CD4-positive, alpha-beta T cell (primary cell): ENCODE measurements at regions of chr7 and their contacts with region 1.

Region 1: DNA sequence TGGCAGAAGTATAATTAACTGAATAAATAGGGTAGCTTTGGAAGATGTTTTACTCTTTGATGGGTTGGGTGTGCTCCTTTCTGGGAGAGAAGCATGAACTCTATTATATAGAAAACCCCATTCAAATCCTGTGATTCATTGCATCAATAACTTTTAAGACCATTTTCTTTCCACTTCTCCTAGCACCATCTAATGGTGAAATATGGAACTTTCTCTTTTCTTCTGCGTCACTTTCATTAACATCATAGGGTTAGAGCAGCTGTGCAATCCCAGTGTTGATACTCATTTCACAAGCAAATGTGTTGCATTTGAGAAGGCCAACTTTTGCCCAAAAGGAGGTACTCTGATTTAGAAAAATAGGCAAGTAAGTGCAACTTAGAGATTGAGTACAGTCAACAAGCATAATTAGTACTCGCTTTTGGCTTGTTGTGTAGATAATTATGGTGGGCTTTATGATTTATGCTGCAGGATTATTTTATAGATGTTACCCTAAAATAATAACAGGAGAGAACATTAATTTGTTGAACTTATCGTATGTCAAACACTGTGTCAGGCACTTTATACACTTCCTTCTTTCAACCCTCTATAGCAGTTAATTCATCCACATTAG is 92.9 kb downstream of the CPED1 start:
- DNase-seq: peak in 3 of 14 experiments; percentile 57 to 68 (median 66)
- ATAC-seq: peak; percentile 74
- H3K4me3 ChIP-seq: no peak overlapping the region
- H3K4me3 Mint-ChIP-seq: no peak overlapping the region
- H3K27ac ChIP-seq: no peak overlapping the region
- H3K27ac Mint-ChIP-seq: no peak overlapping the region
- H3K4me1 ChIP-seq: no peaks in the 10 kb centered on the region
- H3K4me1 Mint-ChIP-seq: no peaks in the 10 kb centered on the region
- H3K27me3 ChIP-seq: peaks cover 0 to 4% of the 10 kb centered on the region in 2 experiments
- H3K27me3 Mint-ChIP-seq: peaks cover 23% of the 10 kb centered on the region
- CTCF ChIP-seq: peak; percentile 79

Region 2: DNA sequence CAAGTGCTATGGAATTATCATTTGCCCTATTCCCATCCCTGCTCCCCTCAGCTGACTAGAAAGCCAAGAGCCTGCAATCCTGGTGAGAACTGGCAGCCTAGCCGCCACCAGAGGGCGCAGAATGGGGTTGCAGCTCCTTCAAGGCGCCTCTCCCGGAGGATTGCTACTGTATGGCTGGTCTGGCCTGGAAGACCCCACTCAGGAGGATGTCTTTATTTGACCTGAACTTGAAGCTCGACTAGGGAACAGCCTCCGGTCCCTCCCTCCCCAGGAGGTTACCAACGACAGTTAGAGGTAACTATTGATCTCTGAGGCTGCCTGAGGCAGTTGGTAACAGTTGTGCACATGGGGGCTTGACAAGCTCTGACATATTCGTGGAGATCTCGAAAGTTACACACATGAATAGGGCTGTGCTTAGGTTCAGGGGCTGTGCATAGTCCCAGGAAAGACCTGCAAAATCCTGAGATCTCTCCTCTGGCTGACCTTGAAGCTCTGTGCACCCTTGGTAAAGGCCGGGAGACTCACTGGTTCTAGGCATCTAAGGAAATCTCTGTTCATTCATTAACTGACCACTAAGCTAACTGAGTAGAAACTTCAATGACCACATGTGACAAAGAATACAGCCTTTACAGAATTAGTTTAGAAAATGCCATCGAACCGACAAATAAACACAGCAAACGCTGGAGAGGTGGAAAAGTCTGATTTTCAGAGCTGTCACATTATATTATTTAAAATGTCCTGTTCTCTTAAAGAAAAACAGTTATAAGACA is 289.2 kb before region 1 on chr7:
- CTCF ChIA-PET with region 1: no interaction called
- POLR2A ChIA-PET with region 1: no interaction called
- intact Hi-C with region 1: loop called in 1 of 2 experiments (anchors 5 kb)
- DNase-seq: peak; percentile 22 to 69 (median 42)
- ATAC-seq: no peak
- H3K4me3 ChIP-seq: no peak overlapping the region
- H3K4me3 Mint-ChIP-seq: no peak overlapping the region
- H3K27ac ChIP-seq: no peak overlapping the region
- H3K27ac Mint-ChIP-seq: no peak overlapping the region
- H3K4me1 ChIP-seq: no peaks in the 10 kb centered on the region
- H3K4me1 Mint-ChIP-seq: no peaks in the 10 kb centered on the region
- H3K27me3 ChIP-seq: peaks cover 3 to 4% of the 10 kb centered on the region in 2 experiments
- H3K27me3 Mint-ChIP-seq: peaks cover 5% of the 10 kb centered on the region
- CTCF ChIP-seq: peak; percentile 80

Region 3: GRCh38 chr7:120799813-120800475 is 281.5 kb before region 1 on chr7:
- CTCF ChIA-PET with region 1: no interaction called
- POLR2A ChIA-PET with region 1: no interaction called
- intact Hi-C with region 1: loop called in 1 of 2 experiments (anchors 5 kb)
- DNase-seq: no peak
- ATAC-seq: no peak
- H3K4me3 ChIP-seq: no peak overlapping the region
- H3K4me3 Mint-ChIP-seq: no peak overlapping the region
- H3K27ac ChIP-seq: no peak overlapping the region
- H3K27ac Mint-ChIP-seq: no peak overlapping the region
- H3K4me1 ChIP-seq: no peaks in the 10 kb centered on the region
- H3K4me1 Mint-ChIP-seq: no peaks in the 10 kb centered on the region
- H3K27me3 ChIP-seq: no peaks in the 10 kb centered on the region
- H3K27me3 Mint-ChIP-seq: peaks cover 8% of the 10 kb centered on the region
- CTCF ChIP-seq: no peak

Region 4: GRCh38 chr7:120805636-120806388 is 275.6 kb before region 1 on chr7:
- CTCF ChIA-PET with region 1: interaction called, 7 read pairs
- POLR2A ChIA-PET with region 1: no interaction called
- intact Hi-C with region 1: loop called (anchors 1 to 5 kb)
- DNase-seq: peak in 13 of 14 experiments; percentile 9 to 72 (median 26)
- ATAC-seq: peak; percentile 41
- H3K4me3 ChIP-seq: no peak overlapping the region
- H3K4me3 Mint-ChIP-seq: no peak overlapping the region
- H3K27ac ChIP-seq: no peak overlapping the region
- H3K27ac Mint-ChIP-seq: no peak overlapping the region
- H3K4me1 ChIP-seq: no peaks in the 10 kb centered on the region
- H3K4me1 Mint-ChIP-seq: no peaks in the 10 kb centered on the region
- H3K27me3 ChIP-seq: peaks cover 0 to 6% of the 10 kb centered on the region in 2 experiments
- H3K27me3 Mint-ChIP-seq: peaks cover 19% of the 10 kb centered on the region
- CTCF ChIP-seq: peak; percentile 84

Region 5: GRCh38 chr7:120987683-120988590 is 93.5 kb before region 1 on chr7:
- CTCF ChIA-PET with region 1: interaction called, 14 read pairs
- POLR2A ChIA-PET with region 1: interaction called, 3 read pairs
- intact Hi-C with region 1: loop called (anchors 1 kb)
- DNase-seq: peak; percentile 77 to 94 (median 83)
- ATAC-seq: peak; percentile 100
- H3K4me3 ChIP-seq: peak overlapping the region; percentile 10
- H3K4me3 Mint-ChIP-seq: peak overlapping the region; percentile 44
- H3K27ac ChIP-seq: no peak overlapping the region
- H3K27ac Mint-ChIP-seq: no peak overlapping the region
- H3K4me1 ChIP-seq: peaks cover 20% of the 10 kb centered on the region
- H3K4me1 Mint-ChIP-seq: peaks cover 26% of the 10 kb centered on the region
- H3K27me3 ChIP-seq: peaks cover 25 to 52% of the 10 kb centered on the region in 2 experiments
- H3K27me3 Mint-ChIP-seq: peaks cover 75% of the 10 kb centered on the region
- CTCF ChIP-seq: peak; percentile 95

Region 6: DNA sequence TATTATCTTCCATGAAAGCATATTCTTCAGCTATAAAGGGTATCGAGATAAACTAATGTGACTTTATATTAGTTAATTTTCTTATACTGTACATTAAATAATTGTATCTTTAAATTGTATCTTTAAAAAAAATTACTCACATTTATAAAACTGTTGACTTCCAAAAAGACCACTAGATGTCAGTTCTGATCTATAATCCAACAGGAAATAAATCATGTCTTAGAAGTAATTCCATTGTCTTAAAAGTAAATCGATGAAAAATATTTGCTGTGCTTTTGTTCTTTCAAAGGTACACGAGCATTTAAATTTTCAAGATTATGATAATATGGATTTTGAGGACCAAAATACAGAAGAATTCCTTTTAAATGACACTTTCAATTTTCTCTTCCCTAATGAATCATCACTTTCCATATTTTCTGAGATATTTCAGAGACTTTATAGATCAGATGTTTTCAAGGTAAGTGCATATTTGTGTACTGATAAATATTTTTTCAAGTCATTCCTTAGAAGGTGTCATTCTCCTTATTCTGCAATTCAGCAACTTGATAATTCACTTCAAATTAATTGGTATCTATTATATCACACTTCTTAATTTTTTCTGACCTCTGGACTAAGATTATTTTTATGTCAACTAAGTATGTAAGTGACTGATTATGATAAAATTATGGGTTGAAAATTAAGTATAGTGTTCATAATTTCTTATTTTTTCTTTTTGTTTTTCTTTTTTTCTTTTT is 45.5 kb after region 1 on chr7:
- CTCF ChIA-PET with region 1: no interaction called
- POLR2A ChIA-PET with region 1: no interaction called
- intact Hi-C with region 1: no loop called
- DNase-seq: no peak
- ATAC-seq: no peak
- H3K4me3 ChIP-seq: no peak overlapping the region
- H3K4me3 Mint-ChIP-seq: no peak overlapping the region
- H3K27ac ChIP-seq: no peak overlapping the region
- H3K27ac Mint-ChIP-seq: no peak overlapping the region
- H3K4me1 ChIP-seq: no peaks in the 10 kb centered on the region
- H3K4me1 Mint-ChIP-seq: no peaks in the 10 kb centered on the region
- H3K27me3 ChIP-seq: peaks cover 0 to 3% of the 10 kb centered on the region in 2 experiments
- H3K27me3 Mint-ChIP-seq: peaks cover 15% of the 10 kb centered on the region
- CTCF ChIP-seq: no peak